Activated naive CD4-positive, alpha-beta T cell treated with anti-CD3 and anti-CD28 coated beads for 36 hours (primary cell): ENCODE measurements at regions of chr14 and their contacts with region 1.

Region 1: GRCh38 chr14:104932676-104933631 is 8.3 kb downstream of the PLD4 start:
- DNase-seq: peak; percentile 91
- H3K4me3 Mint-ChIP-seq: peak overlapping the region; percentile 56
- H3K27ac Mint-ChIP-seq: no peak overlapping the region
- H3K4me1 Mint-ChIP-seq: peaks cover 2% of the 10 kb centered on the region
- H3K27me3 Mint-ChIP-seq: peaks cover 11% of the 10 kb centered on the region

Region 2: DNA sequence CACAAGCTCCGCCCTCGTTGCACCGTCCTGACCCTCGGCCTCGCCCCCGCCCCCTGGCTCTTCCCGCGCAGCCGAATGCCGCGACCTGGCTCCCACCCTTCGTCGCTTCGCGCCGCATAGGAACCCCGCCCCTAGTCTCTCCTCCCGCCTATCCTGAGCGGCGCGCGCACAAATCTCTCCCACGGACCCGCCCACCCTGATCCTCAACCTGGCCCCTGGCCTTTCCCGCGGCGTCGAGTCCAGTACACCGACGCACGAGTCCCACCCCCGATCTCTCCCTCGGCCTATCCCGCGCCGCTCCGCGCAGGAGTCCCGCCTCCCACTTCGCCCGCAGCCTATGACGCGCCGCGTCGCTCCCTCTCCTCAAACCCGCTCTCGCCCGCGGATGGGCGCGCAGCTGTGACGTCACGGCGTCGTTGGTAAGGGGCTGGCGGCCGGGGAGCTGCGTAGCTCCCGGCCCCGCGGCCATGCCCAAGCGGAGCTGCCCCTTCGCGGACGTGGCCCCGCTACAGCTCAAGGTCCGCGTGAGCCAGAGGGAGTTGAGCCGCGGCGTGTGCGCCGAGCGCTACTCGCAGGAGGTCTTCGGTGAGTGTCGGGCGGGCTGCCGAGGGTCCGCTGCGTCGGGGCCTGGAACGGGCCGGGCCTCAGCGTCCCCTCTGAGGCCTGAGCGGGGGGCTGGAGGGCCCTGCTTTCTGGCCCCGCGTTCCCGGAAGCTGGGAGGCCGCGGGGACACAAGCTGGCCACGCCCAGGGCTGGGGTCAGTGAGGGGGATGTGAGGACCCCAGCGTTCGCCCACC is 180.0 kb before region 1 on chr14 and contains the start of gene SIVA1:
- CTCF ChIA-PET with region 1: no interaction called
- intact Hi-C with region 1: no loop called
- DNase-seq: peak; percentile 100
- H3K4me3 Mint-ChIP-seq: peak within 1 kb of the TSS; percentile 91
- H3K27ac Mint-ChIP-seq: peak within 1 kb of the TSS; percentile 88
- H3K4me1 Mint-ChIP-seq: peaks cover 32% of the 10 kb centered on the region
- H3K27me3 Mint-ChIP-seq: no peaks in the 10 kb centered on the region
- total RNA-seq, gene SIVA1: 86.1 to 92.7 TPM

Region 3: GRCh38 chr14:104976198-104977007 is 43.4 kb after region 1 on chr14:
- CTCF ChIA-PET with region 1: no interaction called
- intact Hi-C with region 1: loop called (anchors 1 kb)
- DNase-seq: peak; percentile 89
- H3K4me3 Mint-ChIP-seq: peak overlapping the region; percentile 30
- H3K27ac Mint-ChIP-seq: no peak overlapping the region
- H3K4me1 Mint-ChIP-seq: peaks cover 11% of the 10 kb centered on the region
- H3K27me3 Mint-ChIP-seq: peaks cover 17% of the 10 kb centered on the region